ENCODE measurements at regions of chr1 and their contacts with region 1.

Region 1: DNA sequence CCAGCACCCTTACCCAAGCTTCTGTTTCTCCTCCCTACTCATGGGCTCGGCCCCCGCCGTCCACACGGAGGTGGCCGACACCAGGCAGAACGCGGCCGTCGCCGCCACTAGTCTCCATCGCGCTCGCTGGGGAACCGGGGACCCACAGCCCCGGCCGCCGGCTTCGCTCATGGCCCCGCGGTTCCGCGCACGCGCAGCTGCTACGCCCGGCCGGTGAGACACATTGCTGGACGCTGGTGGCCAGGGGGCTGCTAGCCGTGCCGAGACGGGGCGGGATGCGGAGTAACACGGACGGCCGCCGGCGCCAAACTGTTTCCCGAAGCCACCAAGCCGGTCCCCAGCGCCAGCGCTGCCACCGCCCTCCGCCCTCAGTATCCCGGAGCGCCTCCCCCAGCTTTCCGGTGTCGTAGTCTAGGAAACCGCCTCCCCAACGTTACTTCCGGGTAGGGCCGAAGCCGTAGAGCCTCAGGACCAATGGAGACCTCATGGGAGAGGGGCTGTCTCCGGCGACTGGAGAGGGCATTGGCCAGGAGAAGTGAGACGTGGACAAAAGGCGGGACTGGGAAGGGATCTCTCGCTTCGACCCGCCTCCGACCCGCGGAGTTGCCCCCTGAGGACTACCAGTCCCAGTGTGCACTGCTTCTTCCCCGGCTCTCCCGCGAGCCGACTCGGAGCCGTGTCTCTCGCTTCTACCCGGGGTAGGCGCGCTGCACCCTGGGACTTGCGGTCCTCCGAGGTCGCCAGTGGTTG is at the start of gene EDEM3:
- DNase-seq: peak; percentile 99
- ATAC-seq: peak; percentile 97
- H3K4me3 Mint-ChIP-seq: peak within 1 kb of the TSS; percentile 81
- H3K27ac Mint-ChIP-seq: peak within 1 kb of the TSS; percentile 96
- H3K4me1 Mint-ChIP-seq: peaks cover 34% of the 10 kb centered on the region
- H3K27me3 Mint-ChIP-seq: peaks cover 9% of the 10 kb centered on the region
- total RNA-seq, gene EDEM3: 20.8 to 28.6 TPM

Region 2: GRCh38 chr1:184743062-184743756 is 11.4 kb before region 1 on chr1:
- CTCF ChIA-PET with region 1: interaction called, 8 read pairs
- POLR2A ChIA-PET with region 1: interaction called, 14 read pairs
- DNase-seq: peak; percentile 41
- ATAC-seq: peak; percentile 94
- H3K4me3 Mint-ChIP-seq: no peak overlapping the region
- H3K27ac Mint-ChIP-seq: peak overlapping the region; percentile 55
- H3K4me1 Mint-ChIP-seq: peaks cover 34% of the 10 kb centered on the region
- H3K27me3 Mint-ChIP-seq: no peaks in the 10 kb centered on the region

Region 3: GRCh38 chr1:184843732-184844495 is 89.3 kb after region 1 on chr1:
- CTCF ChIA-PET with region 1: no interaction called
- POLR2A ChIA-PET with region 1: no interaction called
- DNase-seq: peak; percentile 75
- ATAC-seq: peak; percentile 77
- H3K4me3 Mint-ChIP-seq: peak overlapping the region; percentile 13
- H3K27ac Mint-ChIP-seq: peak overlapping the region; percentile 71
- H3K4me1 Mint-ChIP-seq: peaks cover 40% of the 10 kb centered on the region
- H3K27me3 Mint-ChIP-seq: no peaks in the 10 kb centered on the region

Region 4: GRCh38 chr1:184973272-184974055 is 218.8 kb after region 1 on chr1:
- CTCF ChIA-PET with region 1: no interaction called
- POLR2A ChIA-PET with region 1: interaction called, 10 read pairs
- DNase-seq: peak; percentile 26
- ATAC-seq: peak; percentile 8
- H3K4me3 Mint-ChIP-seq: peak overlapping the region; percentile 88
- H3K27ac Mint-ChIP-seq: peak overlapping the region; percentile 89
- H3K4me1 Mint-ChIP-seq: peaks cover 47% of the 10 kb centered on the region
- H3K27me3 Mint-ChIP-seq: peaks cover 19% of the 10 kb centered on the region

Region 5: DNA sequence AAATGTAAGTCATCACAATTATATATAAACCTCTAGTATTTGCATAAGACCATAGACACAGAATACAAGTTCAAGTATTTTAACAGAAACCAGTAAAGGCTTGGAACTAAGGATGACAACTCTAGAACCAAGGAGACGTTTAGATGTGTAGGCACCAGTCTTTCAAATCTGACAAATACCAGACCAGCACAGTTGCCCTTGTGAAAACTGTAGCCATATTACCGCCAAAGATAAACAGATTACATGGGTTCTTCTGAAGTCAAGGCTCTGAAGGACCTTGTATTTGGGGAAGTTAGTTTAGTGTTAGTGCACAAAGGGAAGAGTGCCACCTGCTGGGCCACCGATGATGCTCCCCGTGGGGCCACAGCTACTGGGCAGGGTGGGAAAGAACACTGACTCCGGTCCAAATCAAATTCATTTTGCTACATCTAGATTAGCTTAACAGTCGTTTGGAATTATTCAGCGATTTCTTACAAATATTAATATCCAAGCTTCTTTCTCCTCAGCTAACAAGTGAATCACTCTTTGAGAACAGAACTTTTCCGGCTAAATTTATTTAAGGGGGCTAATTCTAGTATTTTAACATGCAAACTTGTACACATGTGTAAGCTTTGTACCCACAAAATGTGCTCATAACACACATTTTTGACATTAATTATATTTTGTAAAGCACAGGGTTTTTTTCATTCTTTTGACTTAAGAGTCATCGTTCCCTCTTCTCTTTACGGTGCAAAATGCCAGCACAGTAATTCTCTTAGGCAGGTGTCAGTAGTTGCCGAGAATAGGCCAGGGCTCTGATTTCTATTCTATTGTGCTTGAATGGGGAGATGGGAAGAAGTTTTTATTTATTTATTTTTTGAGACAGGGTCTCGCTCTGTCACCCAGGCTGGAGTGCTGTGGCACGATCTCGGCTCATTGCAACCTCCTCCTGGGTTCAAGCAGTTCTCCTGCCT is 227.6 kb after region 1 on chr1:
- CTCF ChIA-PET with region 1: interaction called, 12 read pairs
- POLR2A ChIA-PET with region 1: no interaction called
- DNase-seq: peak; percentile 83
- ATAC-seq: peak; percentile 99
- H3K4me3 Mint-ChIP-seq: no peak overlapping the region
- H3K27ac Mint-ChIP-seq: no peak overlapping the region
- H3K4me1 Mint-ChIP-seq: peaks cover 7% of the 10 kb centered on the region
- H3K27me3 Mint-ChIP-seq: peaks cover 28% of the 10 kb centered on the region